Common myeloid progenitor, CD34-positive (primary cell): ENCODE measurements at regions of chr10 and their contacts with region 1.

Region 1: GRCh38 chr10:103911021-103911459 is 6.9 kb downstream of the STN1 start:
- DNase-seq: peak; percentile 52 to 90 (median 88)
- H3K4me3 ChIP-seq: peak overlapping the region in 6 of 7 experiments; percentile 13 to 65 (median 50)
- H3K27ac ChIP-seq: peak overlapping the region; percentile 48 to 75
- H3K4me1 ChIP-seq: peaks cover 42 to 83% (median 66%) of the 10 kb centered on the region in 4 experiments
- H3K27me3 ChIP-seq: no peaks in the 10 kb centered on the region

Region 2: DNA sequence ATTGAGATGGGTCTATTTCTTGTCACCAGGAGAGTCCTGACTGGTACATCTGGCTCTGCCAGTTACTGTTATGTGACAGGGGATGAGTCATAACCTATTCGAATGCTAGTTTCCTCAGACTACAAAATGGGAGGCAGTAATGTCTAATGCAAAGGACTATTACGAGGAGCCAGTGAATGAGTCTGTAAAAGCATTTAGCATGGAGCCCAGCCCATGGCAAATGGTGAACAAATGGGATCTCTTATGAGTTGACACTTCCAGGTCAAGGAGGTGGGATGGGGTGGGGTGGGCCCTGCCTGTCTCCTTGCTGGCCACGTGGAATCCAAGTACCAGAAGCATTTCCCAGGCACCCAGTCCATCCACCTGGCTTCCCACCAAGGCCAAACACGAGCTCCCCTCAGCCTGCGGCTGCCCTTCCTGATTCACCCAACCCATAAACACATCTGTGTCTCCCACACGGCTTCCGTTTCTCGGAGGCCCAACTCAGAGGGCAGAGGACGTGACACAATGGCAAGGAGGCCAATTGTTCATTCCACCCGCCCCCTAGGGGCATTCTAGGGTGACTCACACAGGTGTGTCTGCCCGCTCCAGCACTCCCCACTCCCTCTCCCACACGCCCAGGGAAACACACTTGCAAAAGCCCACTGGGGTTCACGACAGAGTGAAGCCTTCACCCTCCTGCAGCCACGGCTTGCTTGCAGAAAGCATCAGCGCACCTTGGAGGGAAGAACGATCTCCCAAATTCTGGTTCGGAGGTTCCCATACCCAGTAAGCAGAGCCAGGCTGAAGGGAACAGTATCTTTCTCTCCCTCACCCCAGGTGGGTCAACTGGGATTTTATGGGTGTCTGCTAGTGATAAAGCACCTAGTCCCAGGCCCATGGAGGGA is 165.5 kb before region 1 on chr10:
- CTCF ChIA-PET with region 1: no interaction called
- POLR2A ChIA-PET with region 1: no interaction called
- DNase-seq: peak in 2 of 3 donors; percentile 47 to 53
- H3K4me3 ChIP-seq: no peak overlapping the region
- H3K27ac ChIP-seq: no peak overlapping the region
- H3K4me1 ChIP-seq: peaks cover 0 to 37% (median 2%) of the 10 kb centered on the region in 4 experiments
- H3K27me3 ChIP-seq: no peaks in the 10 kb centered on the region

Region 3: GRCh38 chr10:103895411-103896186 is 15.4 kb before region 1 on chr10:
- CTCF ChIA-PET with region 1: interaction called, 13 read pairs
- POLR2A ChIA-PET with region 1: interaction called, 3 read pairs
- DNase-seq: no peak
- H3K4me3 ChIP-seq: no peak overlapping the region
- H3K27ac ChIP-seq: no peak overlapping the region
- H3K4me1 ChIP-seq: peaks cover 0 to 8% (median 3%) of the 10 kb centered on the region in 4 experiments
- H3K27me3 ChIP-seq: no peaks in the 10 kb centered on the region